ENCODE measurements at regions of chr7 and their contacts with region 1.

Region 1: DNA sequence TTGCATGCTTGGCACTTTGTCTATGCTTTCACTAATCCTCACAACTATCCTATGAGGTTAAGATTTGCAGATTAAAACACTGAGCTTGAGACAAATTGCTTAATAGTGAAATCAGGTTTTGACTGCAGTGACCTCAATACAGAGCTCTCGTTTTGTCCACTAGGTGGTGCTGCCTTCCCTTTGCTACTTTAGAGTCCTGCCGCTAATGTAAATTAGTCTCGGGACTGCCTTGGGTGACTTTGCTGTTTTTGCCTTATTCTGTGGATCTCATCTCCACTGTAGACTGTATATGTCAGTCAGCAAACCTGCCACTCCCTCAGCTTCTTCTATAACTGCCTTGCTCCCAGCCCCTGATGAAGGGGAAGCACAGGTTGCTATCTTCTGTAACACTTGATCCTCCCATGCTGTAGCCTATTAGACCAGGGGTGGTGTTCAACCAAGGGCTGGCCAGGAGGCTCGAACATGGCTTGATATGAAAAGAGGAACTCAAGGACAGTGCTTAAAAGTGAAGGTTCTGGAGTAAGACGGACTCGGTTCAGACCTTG is 26.0 kb downstream of the ASB4 start:
- DNase-seq: peak; percentile 71

Region 2: DNA sequence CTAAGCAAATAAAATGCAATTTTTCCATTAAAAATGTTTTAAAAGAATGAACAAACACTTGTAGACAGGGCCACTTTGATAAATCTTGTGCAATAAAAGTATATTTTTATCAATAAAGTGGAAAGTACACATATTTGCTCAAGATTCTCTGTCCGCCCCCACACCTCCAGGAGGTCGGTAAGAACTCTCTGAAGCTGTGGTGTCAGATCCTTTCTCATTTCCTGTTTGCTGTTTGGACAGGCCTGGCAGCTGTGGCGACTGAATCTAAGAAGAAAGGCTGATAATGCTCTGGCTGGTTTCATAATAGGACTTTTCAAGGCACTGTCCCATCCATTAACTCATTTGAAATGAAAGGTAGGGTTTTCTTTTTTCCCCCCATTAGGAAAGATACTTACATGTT is 41.3 kb before region 1 on chr7:
- in situ Hi-C with region 1: no loop called
- DNase-seq: no peak

Region 3: GRCh38 chr7:95549818-95550529 is 38.2 kb after region 1 on chr7:
- in situ Hi-C with region 1: no loop called
- DNase-seq: peak; percentile 43

Region 4: DNA sequence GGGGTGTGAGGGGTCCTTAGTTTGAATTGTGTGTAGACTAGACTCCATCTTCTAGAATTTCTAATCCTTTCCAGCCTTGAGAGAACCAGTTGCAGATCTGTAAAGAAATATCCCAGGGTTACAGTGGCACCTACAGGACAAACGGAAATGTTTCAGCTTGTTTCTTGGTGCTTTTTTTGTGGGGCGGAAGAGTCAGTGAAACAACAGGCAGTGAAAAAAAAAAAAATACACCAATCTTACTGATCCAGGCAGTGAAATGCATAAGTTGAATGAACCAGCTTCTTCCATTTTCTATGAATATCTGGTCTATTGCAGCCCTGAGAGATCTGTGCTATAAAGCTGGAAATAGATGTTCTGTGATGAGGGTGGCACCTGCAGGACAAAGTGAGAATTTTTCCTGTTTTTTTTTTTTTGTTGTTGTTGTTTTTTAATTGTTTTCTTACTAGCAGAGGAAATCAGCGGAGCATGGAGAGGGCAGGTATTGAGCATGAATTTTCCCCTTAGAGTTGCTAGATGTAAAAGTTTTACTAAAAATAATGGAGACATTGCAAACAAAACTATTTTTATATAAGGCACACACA is 178.7 kb after region 1 on chr7:
- in situ Hi-C with region 1: loop called (anchors 25 kb)
- DNase-seq: peak; percentile 73